ENCODE measurements at regions of chr2 and their contacts with region 1.

Region 1: DNA sequence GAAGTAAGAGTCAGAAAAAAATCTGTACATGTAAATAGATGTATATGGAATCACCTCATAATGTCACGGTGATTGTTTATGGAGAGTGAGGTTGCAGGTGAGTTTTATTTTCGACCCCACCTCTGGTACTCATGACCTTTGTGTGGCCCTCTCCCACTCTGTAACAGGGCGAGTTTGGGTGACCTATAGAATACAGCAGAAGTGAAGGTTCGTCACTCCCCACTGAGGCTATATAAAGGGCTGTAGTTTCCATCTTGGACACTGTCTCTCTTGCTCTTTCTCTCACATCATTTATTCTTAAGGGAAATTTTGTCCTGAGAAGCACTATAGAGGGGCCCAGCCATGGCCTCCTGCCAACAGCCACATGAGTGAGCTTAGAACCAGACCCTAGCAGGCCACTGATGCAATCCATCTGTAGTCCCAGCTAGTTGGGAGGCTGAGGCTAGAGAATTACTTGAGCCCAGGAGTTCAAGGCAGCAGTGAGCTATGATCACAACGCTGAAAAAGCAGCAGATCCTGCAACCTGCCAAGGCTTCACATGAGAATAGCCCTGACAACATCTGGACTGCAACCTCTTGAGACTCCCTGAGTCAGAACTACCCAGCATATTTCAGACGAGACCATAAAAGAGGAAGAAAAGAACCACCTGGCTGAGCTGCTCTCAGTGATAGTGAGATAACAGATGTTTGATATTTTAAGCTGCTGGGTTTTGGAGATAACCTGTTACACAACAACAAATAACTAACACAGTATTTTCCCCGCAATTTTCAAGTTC is 74.3 kb upstream of the SLC1A4 start:
- DNase-seq: no peak
- H3K4me3 Mint-ChIP-seq: no peak overlapping the region
- H3K27ac Mint-ChIP-seq: no peak overlapping the region
- H3K4me1 Mint-ChIP-seq: peaks cover 42% of the 10 kb centered on the region
- H3K27me3 Mint-ChIP-seq: no peaks in the 10 kb centered on the region

Region 2: DNA sequence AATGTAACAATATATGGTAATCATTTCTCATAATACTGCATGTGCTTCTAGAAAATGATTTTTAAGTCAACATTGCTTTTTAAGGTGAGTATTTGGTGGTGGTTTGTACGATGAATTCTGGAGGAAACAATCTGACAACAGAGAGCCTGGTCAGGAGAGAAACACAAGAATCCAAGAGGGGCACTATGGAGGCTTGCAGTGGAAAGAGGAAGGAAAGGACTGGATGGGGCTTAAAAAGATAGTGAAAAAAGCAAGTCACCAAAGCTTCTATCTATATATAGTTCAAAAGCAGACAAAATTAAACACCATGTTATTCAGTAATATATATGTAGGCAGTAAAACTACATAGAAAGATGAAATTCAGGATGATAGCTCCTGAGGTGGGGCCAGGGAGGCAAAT is 151.8 kb before region 1 on chr2:
- intact Hi-C with region 1: no loop called
- DNase-seq: no peak
- H3K4me3 Mint-ChIP-seq: no peak overlapping the region
- H3K27ac Mint-ChIP-seq: no peak overlapping the region
- H3K4me1 Mint-ChIP-seq: peaks cover 41% of the 10 kb centered on the region
- H3K27me3 Mint-ChIP-seq: peaks cover 2% of the 10 kb centered on the region

Region 3: DNA sequence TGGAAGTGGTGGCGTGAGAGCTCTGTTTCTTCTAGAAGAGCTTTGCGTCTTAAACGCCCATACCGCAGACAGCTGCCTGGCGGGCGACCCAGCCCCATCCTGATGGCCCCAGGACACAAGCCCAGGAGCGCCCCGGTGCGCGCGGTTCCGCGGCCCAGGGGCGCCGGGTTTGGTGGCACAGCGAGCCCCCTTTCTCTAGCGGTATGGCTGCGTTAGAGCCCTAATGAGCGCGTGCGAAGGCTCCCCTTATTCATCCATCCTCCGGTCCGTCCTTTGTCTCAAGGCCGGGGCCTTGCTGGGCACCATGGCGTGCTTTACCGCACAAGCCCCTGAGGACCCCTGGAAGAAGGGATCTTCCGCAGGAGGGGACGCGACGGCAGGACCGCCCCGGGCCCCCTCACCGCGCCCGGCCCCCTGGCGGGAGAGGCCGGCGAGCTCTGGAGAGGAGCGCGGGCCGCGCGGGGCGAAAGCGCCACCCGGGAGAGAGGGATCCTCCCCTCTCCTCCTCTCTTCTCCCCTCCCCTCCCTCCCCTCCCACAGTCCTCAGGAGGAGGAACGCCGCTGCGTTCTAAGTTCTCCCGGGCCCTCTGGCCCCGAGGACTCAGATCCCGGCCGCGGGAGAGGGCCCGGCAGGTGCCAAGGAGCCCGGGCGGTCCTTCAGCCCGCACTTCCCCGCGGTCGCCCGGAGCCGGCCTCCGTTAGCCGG is 73.7 kb after region 1 on chr2:
- intact Hi-C with region 1: loop called (anchors 2 kb)
- DNase-seq: peak; percentile 80
- H3K4me3 Mint-ChIP-seq: peak overlapping the region; percentile 84
- H3K27ac Mint-ChIP-seq: peak overlapping the region; percentile 90
- H3K4me1 Mint-ChIP-seq: peaks cover 65% of the 10 kb centered on the region
- H3K27me3 Mint-ChIP-seq: peaks cover 3% of the 10 kb centered on the region

Region 4: GRCh38 chr2:65031341-65032018 is 116.6 kb after region 1 on chr2:
- intact Hi-C with region 1: loop called (anchors 2 kb)
- DNase-seq: no peak
- H3K4me3 Mint-ChIP-seq: peak overlapping the region; percentile 44
- H3K27ac Mint-ChIP-seq: peak overlapping the region; percentile 10
- H3K4me1 Mint-ChIP-seq: peaks cover 22% of the 10 kb centered on the region
- H3K27me3 Mint-ChIP-seq: no peaks in the 10 kb centered on the region

Region 5: GRCh38 chr2:65040400-65041261 is 125.7 kb after region 1 on chr2:
- intact Hi-C with region 1: loop called (anchors 1 kb)
- DNase-seq: peak; percentile 69
- H3K4me3 Mint-ChIP-seq: no peak overlapping the region
- H3K27ac Mint-ChIP-seq: no peak overlapping the region
- H3K4me1 Mint-ChIP-seq: peaks cover 20% of the 10 kb centered on the region
- H3K27me3 Mint-ChIP-seq: no peaks in the 10 kb centered on the region

Region 6: GRCh38 chr2:65164426-65164891 is 249.5 kb after region 1 on chr2:
- intact Hi-C with region 1: loop called (anchors 10 kb)
- DNase-seq: no peak
- H3K4me3 Mint-ChIP-seq: no peak overlapping the region
- H3K27ac Mint-ChIP-seq: no peak overlapping the region
- H3K4me1 Mint-ChIP-seq: peaks cover 13% of the 10 kb centered on the region
- H3K27me3 Mint-ChIP-seq: peaks cover 2% of the 10 kb centered on the region

Region 7: DNA sequence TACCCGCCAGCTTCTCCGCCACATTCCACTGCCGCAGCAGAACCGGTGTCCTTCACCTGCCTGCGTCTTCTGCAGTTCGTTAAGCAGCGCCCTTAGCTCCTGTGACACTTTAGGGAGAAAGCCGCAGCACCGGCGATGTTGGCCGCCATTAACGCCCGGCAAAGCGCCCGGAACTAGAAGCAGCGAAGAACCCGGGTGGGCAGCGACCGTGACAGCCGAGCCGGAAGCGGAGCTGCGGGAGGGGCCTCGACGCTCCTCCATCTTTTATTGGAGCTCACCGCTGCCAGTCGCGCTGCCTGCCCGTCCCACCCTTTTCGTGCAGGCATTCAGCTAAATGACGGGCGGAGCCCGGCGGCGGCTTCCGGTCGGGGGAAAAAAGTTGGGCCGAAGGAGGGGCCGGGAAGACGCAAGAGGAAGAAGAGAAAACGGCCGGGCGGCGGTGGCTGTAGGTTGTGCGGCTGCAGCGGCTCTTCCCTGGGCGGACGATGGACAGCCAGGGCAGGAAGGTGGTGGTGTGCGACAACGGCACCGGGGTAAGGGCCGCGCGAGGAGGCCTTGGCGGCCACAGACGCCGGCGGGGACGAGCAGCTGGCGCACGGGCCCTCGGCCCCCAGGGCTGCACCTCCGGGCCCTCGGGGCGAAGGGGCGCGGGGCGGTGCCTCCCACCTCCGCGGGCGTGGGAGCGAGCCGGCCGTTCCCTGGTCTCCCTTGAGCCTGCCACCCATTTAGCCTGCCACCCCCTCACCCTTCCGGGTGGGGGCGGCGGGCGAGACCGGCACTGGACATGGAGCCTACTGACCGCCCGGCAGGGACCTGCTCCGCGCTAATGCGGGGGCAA is 312.7 kb after region 1 on chr2 and contains the start of gene ACTR2:
- intact Hi-C with region 1: loop called (anchors 5 kb)
- DNase-seq: peak; percentile 95
- H3K4me3 Mint-ChIP-seq: peak within 1 kb of the TSS; percentile 98
- H3K27ac Mint-ChIP-seq: peak within 1 kb of the TSS; percentile 96
- H3K4me1 Mint-ChIP-seq: peaks cover 27% of the 10 kb centered on the region
- H3K27me3 Mint-ChIP-seq: no peaks in the 10 kb centered on the region
- total RNA-seq, gene ACTR2: 339 and 350 TPM in 2 replicates

Region 8: DNA sequence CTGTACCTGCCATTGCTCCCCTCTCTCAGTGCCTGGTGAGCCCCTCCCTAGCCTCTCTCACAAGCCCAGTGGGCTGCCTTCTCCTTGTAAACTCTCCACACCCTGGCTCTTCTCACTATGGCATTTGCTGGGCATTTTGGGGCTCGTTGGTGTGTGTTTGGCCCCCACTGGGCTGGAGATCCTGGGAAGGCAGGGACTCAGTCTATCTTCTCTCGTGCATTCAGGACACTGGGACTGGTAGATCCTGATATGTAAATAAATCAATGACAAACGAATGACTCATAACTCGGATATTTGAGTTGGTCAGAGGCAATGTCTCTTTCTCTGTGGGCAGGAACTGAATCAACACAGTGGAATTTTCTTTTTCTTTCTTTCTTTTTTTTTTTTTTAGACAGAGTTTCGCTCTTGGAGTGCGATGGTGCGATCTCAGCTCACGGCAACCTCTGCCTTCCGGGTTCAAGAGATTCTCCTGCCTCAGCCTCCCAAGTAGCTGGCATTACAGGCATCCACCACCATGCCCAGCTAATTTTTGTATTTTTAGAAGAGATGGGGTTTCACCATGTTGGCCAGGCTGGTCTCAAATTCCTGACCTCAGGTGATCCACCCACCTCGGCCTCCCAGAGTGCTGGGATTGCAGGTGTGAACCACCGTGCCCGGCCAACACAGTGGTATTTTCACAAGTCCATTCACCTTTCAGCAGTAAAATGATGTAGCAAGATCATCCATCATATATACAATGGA is 662.1 kb after region 1 on chr2:
- intact Hi-C with region 1: loop called (anchors 1 kb)
- DNase-seq: no peak
- H3K4me3 Mint-ChIP-seq: no peak overlapping the region
- H3K27ac Mint-ChIP-seq: no peak overlapping the region
- H3K4me1 Mint-ChIP-seq: peaks cover 3% of the 10 kb centered on the region
- H3K27me3 Mint-ChIP-seq: peaks cover 21% of the 10 kb centered on the region

Measured in activated T-helper 2 cell treated with anti-CD3 and anti-CD28 coated beads, Interferon-gamma antibody, Interleukin-2, Interleukin-4, amounts not matched to agents 10 μg/mL and 5 μg/mL and 100 μg/mL, durations not matched to agents 14 hours and 24 hours and 36 hours (primary cell).